ENCODE measurements at regions of chr15 and their contacts with region 1.

Region 1: DNA sequence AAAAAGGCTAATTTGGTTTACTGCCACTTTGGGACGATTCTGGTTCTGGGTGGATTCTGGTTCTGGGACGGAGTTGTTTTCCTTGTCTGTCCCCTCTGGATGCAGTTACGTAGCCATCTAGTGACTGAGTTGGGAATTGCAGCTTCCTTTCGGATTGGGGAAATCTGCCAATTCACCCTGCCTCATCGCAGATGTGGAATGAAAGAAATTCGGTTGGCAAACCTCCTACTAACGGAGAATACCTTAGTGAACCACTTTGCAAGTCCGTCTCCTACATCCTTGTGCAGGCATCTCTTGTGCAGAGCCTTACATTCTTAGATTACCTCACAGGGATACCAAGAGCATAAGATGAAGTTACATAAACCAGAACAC is 31.5 kb upstream of the AP4E1 start:
- DNase-seq: peak; percentile 79
- H3K4me3 ChIP-seq: peak overlapping the region; percentile 10 to 22 (median 13)
- H3K27ac ChIP-seq: peak overlapping the region; percentile 46
- H3K4me1 ChIP-seq: peaks cover 24% of the 10 kb centered on the region
- H3K27me3 ChIP-seq: no peaks in the 10 kb centered on the region
- CTCF ChIP-seq: peak; percentile 96 to 99

Region 2: GRCh38 chr15:50354838-50355618 is 521.9 kb before region 1 on chr15 and contains the start of gene GABPB1:
- CTCF ChIA-PET with region 1: no interaction called
- dilution Hi-C with region 1: no loop called
- in situ Hi-C with region 1: no loop called
- intact Hi-C with region 1: loop called (anchors 2 kb)
- DNase-seq: peak; percentile 95
- H3K4me3 ChIP-seq: peak within 1 kb of the TSS; percentile 74 to 91 (median 81)
- H3K27ac ChIP-seq: peak within 1 kb of the TSS; percentile 100
- H3K4me1 ChIP-seq: peaks cover 7% of the 10 kb centered on the region
- H3K27me3 ChIP-seq: no peaks in the 10 kb centered on the region
- CTCF ChIP-seq: no peak
- total RNA-seq, gene GABPB1: 21.1 to 38.7 TPM

Region 3: DNA sequence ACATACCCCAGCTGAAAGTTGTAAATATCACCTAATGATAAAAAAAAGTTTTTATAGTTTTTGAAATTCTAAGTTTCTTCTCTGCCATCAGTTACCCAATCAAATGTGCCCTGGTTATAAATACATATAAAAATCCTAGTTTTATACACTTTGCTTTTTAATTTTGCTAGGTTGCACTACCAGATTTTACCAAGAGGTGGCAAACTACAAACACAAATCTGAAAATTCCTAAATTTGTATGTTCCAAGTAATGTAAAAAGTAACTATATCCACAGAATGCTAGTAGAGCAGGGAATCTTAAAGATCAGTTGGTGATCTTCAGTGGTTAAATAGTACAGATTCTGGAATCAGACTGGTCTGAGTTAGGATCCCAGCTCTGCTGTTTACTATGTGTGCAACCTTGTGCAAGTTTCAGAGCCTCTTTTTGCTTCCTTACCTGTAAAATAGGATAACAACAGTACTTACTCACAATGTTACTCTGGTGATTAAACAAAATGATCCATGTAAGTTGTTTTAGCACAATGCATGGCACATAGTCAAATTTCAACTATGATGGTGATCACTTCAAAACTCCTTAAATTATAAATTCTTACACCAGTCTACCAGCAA is 201.3 kb before region 1 on chr15:
- CTCF ChIA-PET with region 1: interaction called, 3 read pairs
- dilution Hi-C with region 1: no loop called
- in situ Hi-C with region 1: loop called (anchors 5 to 10 kb)
- intact Hi-C with region 1: loop called (anchors 1 kb)
- DNase-seq: peak; percentile 10
- H3K4me3 ChIP-seq: no peak overlapping the region
- H3K27ac ChIP-seq: no peak overlapping the region
- H3K4me1 ChIP-seq: peaks cover 9% of the 10 kb centered on the region
- H3K27me3 ChIP-seq: no peaks in the 10 kb centered on the region
- CTCF ChIP-seq: peak; percentile 59 to 75

Region 4: DNA sequence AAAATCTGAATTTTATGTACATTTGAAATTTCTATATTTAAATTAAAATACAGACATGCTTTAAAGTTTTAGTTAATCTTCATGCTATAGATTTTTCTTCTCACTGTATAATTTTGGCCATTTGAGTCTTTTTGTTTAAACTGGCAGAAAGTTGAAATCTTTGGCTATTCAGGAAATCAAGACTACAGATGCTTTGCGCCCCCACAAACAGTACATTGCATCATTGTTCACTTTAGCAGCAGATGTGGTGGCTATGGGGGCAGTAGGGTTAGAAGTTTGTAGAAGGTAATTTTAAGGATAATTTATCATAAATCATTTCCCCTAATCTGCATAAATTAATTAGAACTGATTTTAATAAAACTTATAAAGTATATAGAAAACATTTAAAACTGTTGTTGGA is 132.4 kb before region 1 on chr15:
- CTCF ChIA-PET with region 1: interaction called, 3 read pairs
- dilution Hi-C with region 1: no loop called
- in situ Hi-C with region 1: no loop called
- intact Hi-C with region 1: loop called (anchors 5 kb)
- DNase-seq: no peak
- H3K4me3 ChIP-seq: no peak overlapping the region
- H3K27ac ChIP-seq: no peak overlapping the region
- H3K4me1 ChIP-seq: peaks cover 5% of the 10 kb centered on the region
- H3K27me3 ChIP-seq: no peaks in the 10 kb centered on the region
- CTCF ChIP-seq: no peak

Region 5: GRCh38 chr15:50765195-50765973 is 111.6 kb before region 1 on chr15 and contains the start of gene SPPL2A:
- CTCF ChIA-PET with region 1: interaction called, 9 read pairs
- dilution Hi-C with region 1: no loop called
- in situ Hi-C with region 1: no loop called
- intact Hi-C with region 1: loop called (anchors 5 kb)
- DNase-seq: peak; percentile 85
- H3K4me3 ChIP-seq: peak within 1 kb of the TSS; percentile 66 to 95 (median 90)
- H3K27ac ChIP-seq: peak within 1 kb of the TSS; percentile 84
- H3K4me1 ChIP-seq: peaks cover 5% of the 10 kb centered on the region
- H3K27me3 ChIP-seq: no peaks in the 10 kb centered on the region
- CTCF ChIP-seq: no peak
- total RNA-seq, gene SPPL2A: 76.8 to 107 TPM

Region 6: DNA sequence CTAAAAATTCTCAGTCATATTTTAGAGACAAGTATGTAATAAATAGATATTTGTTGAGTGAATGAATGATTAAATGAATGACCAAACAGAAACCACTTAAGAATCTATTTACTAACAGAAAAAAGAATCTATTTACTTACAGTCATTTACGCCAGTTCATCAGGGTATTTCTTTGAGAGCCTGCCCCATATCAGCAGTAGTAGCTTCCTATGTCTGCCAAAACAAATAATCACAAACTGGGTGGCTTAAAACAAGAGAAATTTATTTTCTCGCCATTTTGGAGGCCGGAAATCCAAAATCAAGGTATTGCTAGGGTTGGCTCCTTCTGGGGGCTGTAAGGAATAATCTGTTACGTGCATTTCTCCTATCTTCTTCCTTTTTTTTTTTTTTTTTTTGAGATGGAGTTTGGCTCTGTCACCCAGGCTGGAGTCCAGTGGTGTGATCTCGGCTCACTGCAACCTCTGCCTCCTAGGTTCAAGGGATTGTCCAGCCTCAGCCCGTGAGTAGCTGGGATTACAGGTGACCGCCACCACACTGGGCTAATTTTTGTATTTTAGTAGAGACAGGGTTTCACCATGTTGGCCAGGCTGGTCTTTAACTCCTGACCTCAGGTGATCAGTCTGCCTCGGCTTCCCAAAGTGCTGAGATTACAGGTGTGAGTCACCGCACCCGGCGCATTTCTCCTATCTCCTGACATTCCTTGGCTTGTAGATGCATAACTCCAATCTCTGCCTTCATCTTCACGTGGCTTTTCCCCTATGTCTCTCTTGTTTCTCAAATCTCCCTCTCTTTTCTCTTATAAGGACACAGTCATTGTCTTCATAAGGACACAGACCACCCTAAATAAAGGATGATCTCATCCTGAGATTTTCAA is 46.3 kb before region 1 on chr15:
- CTCF ChIA-PET with region 1: interaction called, 13 read pairs
- dilution Hi-C with region 1: no loop called
- in situ Hi-C with region 1: no loop called
- intact Hi-C with region 1: no loop called
- DNase-seq: no peak
- H3K4me3 ChIP-seq: no peak overlapping the region
- H3K27ac ChIP-seq: no peak overlapping the region
- H3K4me1 ChIP-seq: peaks cover 10% of the 10 kb centered on the region
- H3K27me3 ChIP-seq: no peaks in the 10 kb centered on the region
- CTCF ChIP-seq: no peak

Region 7: GRCh38 chr15:51281368-51281967 is 404.5 kb after region 1 on chr15:
- CTCF ChIA-PET with region 1: interaction called, 10 read pairs
- dilution Hi-C with region 1: no loop called
- in situ Hi-C with region 1: no loop called
- intact Hi-C with region 1: no loop called
- DNase-seq: peak; percentile 24
- H3K4me3 ChIP-seq: no peak overlapping the region
- H3K27ac ChIP-seq: no peak overlapping the region
- H3K4me1 ChIP-seq: no peaks in the 10 kb centered on the region
- H3K27me3 ChIP-seq: peaks cover 2% of the 10 kb centered on the region
- CTCF ChIP-seq: peak; percentile 47 to 72

Region 8: GRCh38 chr15:52054381-52054780 is 1177.4 kb after region 1 on chr15:
- CTCF ChIA-PET with region 1: no interaction called
- dilution Hi-C with region 1: no loop called
- in situ Hi-C with region 1: no loop called
- intact Hi-C with region 1: no loop called
- DNase-seq: no peak
- H3K4me3 ChIP-seq: no peak overlapping the region
- H3K27ac ChIP-seq: no peak overlapping the region
- H3K4me1 ChIP-seq: peaks cover 28% of the 10 kb centered on the region
- H3K27me3 ChIP-seq: no peaks in the 10 kb centered on the region
- CTCF ChIP-seq: no peak

Measured in mammary epithelial cell (primary cell).